ENCODE measurements at regions of chr20 and their contacts with region 1.

Region 1: GRCh38 chr20:19692685-19693119 is 65.4 kb upstream of the RIN2 start:
- DNase-seq: peak in 1 of 2 donors; percentile 39
- ATAC-seq: peak; percentile 18 to 31
- H3K4me3 ChIP-seq: peak overlapping the region in 3 of 4 donors; percentile 1 to 24 (median 12)
- H3K27ac ChIP-seq: peak overlapping the region in 2 of 4 donors; percentile 76 to 77
- H3K4me1 ChIP-seq: peaks cover 21 to 23% of the 10 kb centered on the region in 2 donors
- H3K27me3 ChIP-seq: no peaks in the 10 kb centered on the region
- CTCF ChIP-seq: peak; percentile 89 to 96 (median 89)
- POLR2A ChIP-seq: no peak

Region 2: GRCh38 chr20:19566226-19566965 is 126.3 kb before region 1 on chr20:
- in situ Hi-C with region 1: no loop called
- intact Hi-C with region 1: no loop called
- DNase-seq: no peak
- ATAC-seq: no peak
- H3K4me3 ChIP-seq: no peak overlapping the region
- H3K27ac ChIP-seq: no peak overlapping the region
- H3K4me1 ChIP-seq: no peaks in the 10 kb centered on the region
- H3K27me3 ChIP-seq: no peaks in the 10 kb centered on the region
- CTCF ChIP-seq: no peak
- POLR2A ChIP-seq: no peak

Region 3: GRCh38 chr20:19735446-19735845 is 42.7 kb after region 1 on chr20:
- in situ Hi-C with region 1: no loop called
- intact Hi-C with region 1: loop called (anchors 2 kb)
- DNase-seq: peak; percentile 70 to 84
- ATAC-seq: peak; percentile 96 to 97
- H3K4me3 ChIP-seq: no peak overlapping the region
- H3K27ac ChIP-seq: peak overlapping the region; percentile 66 to 81 (median 73)
- H3K4me1 ChIP-seq: peaks cover 10 to 30% of the 10 kb centered on the region in 2 donors
- H3K27me3 ChIP-seq: no peaks in the 10 kb centered on the region
- CTCF ChIP-seq: no peak
- POLR2A ChIP-seq: no peak

Region 4: DNA sequence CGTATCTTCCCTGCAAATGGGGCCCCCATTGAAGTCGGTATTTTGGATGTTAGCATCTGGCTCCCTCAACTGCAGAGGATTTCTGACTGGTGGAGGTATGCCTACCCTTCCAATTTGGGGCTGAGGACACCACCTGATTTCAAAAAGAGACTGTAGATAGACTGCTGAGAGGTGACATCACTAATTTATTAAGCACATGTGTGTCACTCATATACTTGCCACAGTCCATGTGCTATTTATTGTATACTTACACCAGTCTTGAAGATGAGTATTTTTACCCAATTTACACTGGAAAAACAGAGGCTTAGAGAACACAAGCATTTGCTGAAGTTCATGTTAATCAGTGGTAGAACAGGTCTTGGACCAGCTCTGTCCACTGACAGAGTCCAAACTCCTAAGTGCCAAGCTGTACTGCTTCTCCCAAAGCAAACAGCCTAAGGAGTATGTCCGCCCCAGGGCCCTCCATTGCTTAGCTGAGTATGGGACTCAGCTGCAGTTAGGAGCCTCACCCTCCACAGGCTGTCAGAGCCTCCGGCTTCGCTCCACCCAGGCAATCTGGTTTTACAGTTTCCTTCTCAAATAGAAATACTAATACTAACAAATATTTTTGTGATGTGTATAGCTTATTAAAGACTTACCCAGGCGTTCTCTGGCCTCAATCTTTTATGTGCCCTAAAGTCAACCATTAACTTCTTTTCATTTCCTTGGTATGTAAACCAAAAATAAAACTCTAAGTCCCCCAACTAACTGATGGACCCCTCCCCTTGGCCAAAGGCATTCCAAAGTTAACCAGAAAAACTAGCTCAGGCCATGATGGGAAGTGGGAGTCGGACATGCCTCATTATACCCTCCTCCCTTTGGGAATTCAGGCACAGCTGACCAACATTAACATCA is 82.9 kb after region 1 on chr20:
- in situ Hi-C with region 1: loop called in 2 of 4 experiments (anchors 10 to 25 kb)
- intact Hi-C with region 1: loop called (anchors 5 kb)
- DNase-seq: no peak
- ATAC-seq: no peak
- H3K4me3 ChIP-seq: no peak overlapping the region
- H3K27ac ChIP-seq: peak overlapping the region; percentile 3 to 56 (median 22)
- H3K4me1 ChIP-seq: peaks cover 59 to 83% of the 10 kb centered on the region in 2 donors
- H3K27me3 ChIP-seq: no peaks in the 10 kb centered on the region
- CTCF ChIP-seq: no peak
- POLR2A ChIP-seq: no peak

Region 5: DNA sequence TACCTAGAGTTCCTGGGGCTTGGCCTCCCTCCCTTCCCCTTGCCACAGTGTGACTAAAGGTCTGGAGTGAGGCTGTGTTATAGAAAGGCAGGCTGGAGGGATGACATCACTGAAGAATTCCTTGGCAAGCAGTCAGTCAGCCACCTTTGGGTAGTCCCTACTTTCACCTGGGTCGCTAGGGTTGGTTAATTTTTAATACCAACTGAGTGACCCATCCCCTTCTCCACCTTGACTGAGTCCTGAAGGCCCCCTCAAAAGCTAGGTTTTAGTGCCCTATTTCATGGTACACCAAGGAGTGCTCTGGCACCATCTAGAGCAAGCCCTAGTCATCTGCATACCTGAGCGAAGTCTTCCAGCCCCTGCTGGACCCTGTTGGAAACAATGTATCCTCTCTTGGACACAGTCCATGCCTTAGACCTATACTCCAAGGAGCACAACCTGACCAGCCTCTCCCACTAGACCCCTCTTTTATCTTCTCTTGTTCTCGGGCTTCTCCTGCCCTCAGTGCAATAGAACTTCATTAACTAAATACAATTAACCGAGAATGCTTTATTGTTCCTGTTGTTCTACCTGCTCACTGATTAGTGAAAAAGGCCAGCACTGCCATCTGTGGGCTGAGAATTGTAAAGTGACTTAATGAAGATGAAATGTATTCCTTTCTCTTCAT is 109.9 kb after region 1 on chr20:
- in situ Hi-C with region 1: loop called in 1 of 4 experiments (anchors 25 kb)
- intact Hi-C with region 1: loop called (anchors 2 kb)
- DNase-seq: no peak
- ATAC-seq: peak; percentile 36 to 46
- H3K4me3 ChIP-seq: no peak overlapping the region
- H3K27ac ChIP-seq: no peak overlapping the region
- H3K4me1 ChIP-seq: peaks cover 13 to 14% of the 10 kb centered on the region in 2 donors
- H3K27me3 ChIP-seq: no peaks in the 10 kb centered on the region
- CTCF ChIP-seq: peak in 4 of 5 experiments; percentile 13 to 43 (median 38)
- POLR2A ChIP-seq: no peak

Region 6: DNA sequence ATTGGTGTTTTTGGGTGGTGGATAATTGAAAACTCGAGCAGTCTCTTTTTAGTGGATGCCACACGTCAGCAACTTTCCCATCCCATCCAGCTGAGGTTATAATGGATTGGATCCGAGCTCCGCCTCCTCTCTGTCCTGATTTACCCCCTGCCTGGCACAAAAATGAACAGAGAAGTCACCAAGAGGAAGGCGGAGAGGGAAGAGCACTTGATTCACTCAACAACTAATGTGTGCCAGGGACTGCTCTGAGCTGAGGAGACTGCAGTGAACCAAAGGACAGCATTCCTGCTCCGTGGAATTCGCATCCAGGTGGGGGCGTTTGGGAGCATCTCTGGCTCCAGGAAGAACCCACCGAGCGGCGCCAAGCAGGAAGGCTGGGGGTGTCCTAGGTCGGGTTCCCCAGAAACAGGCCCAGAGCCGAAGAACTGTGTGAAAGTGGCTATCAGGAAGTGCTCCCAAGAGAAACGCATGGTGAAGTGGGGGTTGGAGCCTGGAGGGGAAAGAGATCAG is 228.6 kb after region 1 on chr20:
- in situ Hi-C with region 1: no loop called
- intact Hi-C with region 1: loop called (anchors 5 kb)
- DNase-seq: peak; percentile 49 to 81
- ATAC-seq: peak; percentile 89 to 90
- H3K4me3 ChIP-seq: peak overlapping the region; percentile 18 to 42 (median 32)
- H3K27ac ChIP-seq: peak overlapping the region; percentile 73 to 87 (median 82)
- H3K4me1 ChIP-seq: peaks cover 56 to 67% of the 10 kb centered on the region in 2 donors
- H3K27me3 ChIP-seq: no peaks in the 10 kb centered on the region
- CTCF ChIP-seq: no peak
- POLR2A ChIP-seq: no peak

Measured in gastrocnemius medialis (tissue), 4 donors.